PC-3 (cell line): ENCODE measurements at regions of chr3 and their contacts with region 1.

Region 1: GRCh38 chr3:97927654-97928053 is 44.6 kb downstream of the RIOX2 start:
- DNase-seq: peak; percentile 32
- ATAC-seq: peak; percentile 65
- H3K4me3 ChIP-seq: no peak overlapping the region
- H3K27ac ChIP-seq: no peak overlapping the region
- H3K4me1 ChIP-seq: no peaks in the 10 kb centered on the region
- H3K27me3 ChIP-seq: no peaks in the 10 kb centered on the region
- CTCF ChIP-seq: no peak

Region 2: DNA sequence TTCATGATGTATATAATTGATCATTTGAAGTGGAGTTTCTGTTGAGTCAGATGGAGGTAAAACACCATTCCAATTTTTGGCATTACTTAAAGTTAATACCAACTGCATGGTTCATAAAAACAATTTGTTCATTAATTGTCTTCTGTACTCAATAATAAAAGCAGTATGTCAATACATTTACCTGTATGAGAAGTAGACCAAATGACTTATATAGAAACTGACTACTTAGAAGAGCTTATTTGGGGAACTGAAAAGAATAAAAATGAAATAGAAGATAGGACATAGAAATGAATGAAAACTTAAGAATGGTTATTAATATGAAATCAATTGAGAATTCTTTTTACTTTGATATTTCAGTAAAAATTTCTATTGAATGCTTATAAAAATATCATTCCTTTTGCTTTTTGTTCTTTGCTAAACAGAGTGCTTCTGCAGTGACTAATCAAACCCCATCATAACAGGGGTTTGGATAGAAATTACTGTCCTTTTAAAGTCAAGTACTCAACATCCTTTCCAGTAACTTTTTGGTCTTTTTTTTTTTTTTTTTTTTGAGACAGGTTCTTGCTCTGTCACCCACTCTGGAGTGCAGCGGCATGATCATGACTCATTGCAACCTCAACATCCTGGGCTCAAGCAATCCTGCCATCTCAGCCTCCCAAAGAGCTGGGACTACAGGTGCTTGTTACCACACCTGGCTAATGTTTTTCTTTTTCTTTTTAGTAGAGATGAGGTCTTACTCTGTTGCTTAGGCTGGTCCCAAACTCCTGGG is 112.3 kb before region 1 on chr3:
- CTCF ChIA-PET with region 1: no interaction called
- POLR2A ChIA-PET with region 1: interaction called, 10 read pairs
- intact Hi-C with region 1: no loop called
- DNase-seq: peak; percentile 82
- ATAC-seq: peak; percentile 85
- H3K4me3 ChIP-seq: no peak overlapping the region
- H3K27ac ChIP-seq: no peak overlapping the region
- H3K4me1 ChIP-seq: peaks cover 24% of the 10 kb centered on the region
- H3K27me3 ChIP-seq: no peaks in the 10 kb centered on the region
- CTCF ChIP-seq: no peak